Activated T-helper 2 cell treated with anti-CD3 and anti-CD28 coated beads, Interferon-gamma antibody, Interleukin-2, Interleukin-4, amounts not matched to agents 10 μg/mL and 5 μg/mL and 100 μg/mL, durations not matched to agents 14 hours and 24 hours and 36 hours (primary cell): ENCODE measurements at regions of chr4 and their contacts with region 1.

Region 1: DNA sequence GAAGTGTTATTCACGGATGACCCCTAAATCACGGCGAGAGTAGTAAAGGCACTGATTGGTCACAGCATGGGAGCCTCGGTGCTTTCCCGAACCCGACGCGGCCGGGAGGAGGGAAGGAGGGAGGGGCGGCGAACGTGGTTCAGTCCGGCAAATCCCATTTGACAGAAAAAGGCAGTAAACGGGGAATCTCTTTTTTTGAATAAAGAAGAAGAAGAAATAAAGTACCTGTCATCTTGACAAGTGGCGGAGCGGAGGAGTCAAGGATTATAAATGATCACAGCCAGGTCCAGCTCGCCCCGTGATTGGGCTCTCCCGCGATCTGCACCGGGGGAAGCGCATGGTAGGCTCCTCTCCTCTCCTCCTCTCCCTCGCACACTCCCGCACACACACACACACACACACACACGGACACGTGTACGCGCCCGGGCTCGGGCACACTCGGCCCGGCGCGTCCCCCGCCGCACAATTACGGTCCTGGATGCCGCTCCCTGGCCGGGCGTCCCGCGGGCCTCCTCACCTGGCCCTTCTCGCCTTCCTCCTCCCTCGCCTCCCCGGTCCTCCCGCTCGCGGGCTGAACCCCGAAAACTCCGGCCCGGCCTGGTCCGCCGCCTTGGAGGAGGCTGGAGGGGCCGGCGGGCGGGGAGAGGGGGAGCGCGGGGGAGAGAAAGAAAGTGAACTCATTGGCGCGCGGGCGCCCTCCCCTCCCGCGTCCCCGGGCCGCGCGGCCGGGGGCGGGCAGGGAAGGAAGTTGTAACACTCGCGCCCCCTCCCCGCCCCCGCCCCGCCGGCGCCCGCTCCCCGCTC is 99.2 kb upstream of the TENM3 start:
- DNase-seq: no peak
- H3K4me3 Mint-ChIP-seq: peak overlapping the region; percentile 73
- H3K27ac Mint-ChIP-seq: no peak overlapping the region
- H3K4me1 Mint-ChIP-seq: peaks cover 24% of the 10 kb centered on the region
- H3K27me3 Mint-ChIP-seq: peaks cover 65% of the 10 kb centered on the region

Region 2: DNA sequence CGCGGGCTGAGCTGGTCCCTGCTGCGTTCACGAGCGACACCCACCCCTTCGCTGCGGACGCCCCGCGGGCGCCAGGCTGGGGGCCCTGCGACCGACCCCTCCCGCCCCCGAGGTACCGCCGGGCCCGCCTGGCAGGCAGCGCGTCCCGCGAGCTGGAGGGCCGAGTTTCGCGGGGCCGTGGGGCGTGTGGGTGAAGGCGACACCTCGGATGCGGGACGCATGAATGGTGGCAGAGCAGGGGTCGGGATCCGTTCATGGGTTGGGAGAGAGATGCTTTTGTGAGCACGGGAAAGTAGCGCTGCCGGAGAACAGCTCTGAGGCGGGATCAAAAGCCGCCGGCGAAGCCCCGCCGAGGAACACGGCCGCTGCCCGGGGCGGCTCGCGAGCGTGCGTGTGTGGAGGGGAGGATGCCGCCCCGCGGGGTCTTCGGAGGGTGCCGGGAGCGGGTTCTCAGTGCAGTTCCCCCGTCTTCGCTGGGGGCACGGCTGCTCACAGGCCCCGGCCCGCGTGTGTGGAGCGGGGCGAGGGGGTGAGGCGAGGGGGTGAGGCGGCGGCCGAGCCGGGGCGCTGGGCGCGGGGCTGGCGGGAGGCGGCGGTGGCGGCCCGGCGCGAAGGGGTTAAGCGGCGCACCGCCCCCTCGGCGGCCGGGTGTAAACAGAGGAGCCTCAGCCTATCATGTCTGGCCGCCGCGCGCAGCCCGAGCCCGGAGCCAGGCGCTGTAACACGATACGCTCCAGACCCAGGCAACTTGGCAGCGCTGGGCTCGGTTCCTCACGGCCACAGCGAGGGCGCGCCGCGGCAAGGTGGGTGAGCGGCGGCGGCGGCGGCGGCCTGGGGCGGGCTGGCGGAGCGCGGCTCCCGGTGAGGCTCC is 304.5 kb after region 1 on chr4:
- intact Hi-C with region 1: loop called (anchors 5 kb)
- DNase-seq: peak; percentile 14
- H3K4me3 Mint-ChIP-seq: no peak overlapping the region
- H3K27ac Mint-ChIP-seq: no peak overlapping the region
- H3K4me1 Mint-ChIP-seq: peaks cover 6% of the 10 kb centered on the region
- H3K27me3 Mint-ChIP-seq: peaks cover 53% of the 10 kb centered on the region

Region 3: GRCh38 chr4:183098723-183099536 is 954.9 kb after region 1 on chr4 and contains the start of gene WWC2:
- intact Hi-C with region 1: loop called (anchors 10 kb)
- DNase-seq: peak; percentile 25
- H3K4me3 Mint-ChIP-seq: peak within 1 kb of the TSS; percentile 21
- H3K27ac Mint-ChIP-seq: no peak within 1 kb of the TSS
- H3K4me1 Mint-ChIP-seq: no peaks in the 10 kb centered on the region
- H3K27me3 Mint-ChIP-seq: peaks cover 57% of the 10 kb centered on the region
- total RNA-seq, gene WWC2: 0.50 and 0.55 TPM in 2 replicates

Region 4: DNA sequence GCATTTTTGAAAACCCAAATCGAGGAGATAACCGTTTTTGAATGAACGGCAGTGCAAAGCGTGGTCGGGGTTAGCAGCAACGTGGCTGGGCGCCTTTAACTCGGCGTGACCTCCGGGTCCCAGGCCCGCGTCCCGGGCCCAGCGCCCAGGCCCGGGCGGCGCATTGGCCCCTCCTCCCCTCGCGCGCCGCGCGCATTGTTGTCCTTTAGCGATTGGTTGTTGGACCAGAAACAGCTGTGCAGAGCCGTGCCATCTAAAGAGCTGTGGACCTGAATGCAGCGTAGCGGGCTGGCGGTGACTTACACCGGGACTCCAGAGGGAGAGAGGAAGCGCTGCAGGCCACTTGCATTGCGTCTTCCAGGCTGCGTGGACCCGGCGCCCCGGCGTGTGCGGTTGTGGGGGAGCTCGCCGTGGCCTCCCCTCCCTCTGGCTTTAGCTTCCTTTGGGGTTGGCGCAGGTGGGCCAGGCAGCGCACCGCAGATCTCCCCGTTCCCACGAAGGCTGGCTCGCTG is 1761.1 kb after region 1 on chr4 and contains the start of gene STOX2:
- intact Hi-C with region 1: loop called (anchors 10 kb)
- DNase-seq: no peak
- H3K4me3 Mint-ChIP-seq: peak within 1 kb of the TSS; percentile 30
- H3K27ac Mint-ChIP-seq: no peak within 1 kb of the TSS
- H3K4me1 Mint-ChIP-seq: peaks cover 1% of the 10 kb centered on the region
- H3K27me3 Mint-ChIP-seq: peaks cover 66% of the 10 kb centered on the region
- total RNA-seq, gene STOX2: not detected in 2 replicates